CD8-positive, alpha-beta T cell (primary cell): ENCODE measurements at regions of chr7 and their contacts with region 1.

Region 1: DNA sequence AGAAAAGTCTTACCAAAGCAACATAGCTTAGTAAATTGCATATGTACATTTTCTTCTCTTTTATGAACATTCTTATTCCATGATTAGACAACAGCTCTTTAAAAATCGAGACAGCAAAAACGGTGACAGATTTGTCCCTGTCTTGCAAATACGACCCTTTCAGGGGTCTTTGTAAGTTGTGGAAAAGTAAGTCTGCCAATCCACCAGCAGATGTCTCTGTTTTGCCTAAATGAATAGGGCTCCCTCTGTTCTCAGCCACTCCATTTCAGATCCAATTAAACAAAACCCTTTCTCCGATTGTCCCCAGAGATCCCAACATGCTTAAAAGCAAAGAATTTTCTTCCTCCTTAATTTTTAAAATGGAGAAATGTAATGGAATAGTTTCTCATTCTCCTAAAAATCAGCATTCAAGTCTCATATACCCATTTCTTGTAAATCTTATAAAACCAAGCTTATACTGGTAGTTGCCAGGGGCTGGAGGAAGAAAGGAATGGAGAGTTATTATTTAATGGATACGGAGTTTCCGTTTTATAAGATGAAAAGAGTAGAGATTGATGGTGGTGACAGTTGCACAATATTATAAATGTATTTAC is 61.0 kb upstream of the NFE2L3 start:
- DNase-seq: peak in 2 of 9 experiments; percentile 59 to 73
- ATAC-seq: peak; percentile 61
- H3K4me3 ChIP-seq: no peak overlapping the region
- H3K4me3 Mint-ChIP-seq: no peak overlapping the region
- H3K27ac ChIP-seq: no peak overlapping the region
- H3K27ac Mint-ChIP-seq: no peak overlapping the region
- H3K4me1 ChIP-seq: peaks cover 6% of the 10 kb centered on the region
- H3K4me1 Mint-ChIP-seq: peaks cover 16% of the 10 kb centered on the region
- H3K27me3 ChIP-seq: no peaks in the 10 kb centered on the region
- H3K27me3 Mint-ChIP-seq: no peaks in the 10 kb centered on the region
- CTCF ChIP-seq: peak; percentile 70

Region 2: GRCh38 chr7:26078437-26079336 is 12.3 kb before region 1 on chr7:
- CTCF ChIA-PET with region 1: interaction called, 57 read pairs
- POLR2A ChIA-PET with region 1: no interaction called
- intact Hi-C with region 1: loop called in 1 of 2 experiments (anchors 2 kb)
- DNase-seq: peak; percentile 65 to 88 (median 81)
- ATAC-seq: peak; percentile 100
- H3K4me3 ChIP-seq: peak overlapping the region in 1 of 2 experiments; percentile 18
- H3K4me3 Mint-ChIP-seq: no peak overlapping the region
- H3K27ac ChIP-seq: no peak overlapping the region
- H3K27ac Mint-ChIP-seq: no peak overlapping the region
- H3K4me1 ChIP-seq: peaks cover 4% of the 10 kb centered on the region
- H3K4me1 Mint-ChIP-seq: peaks cover 6% of the 10 kb centered on the region
- H3K27me3 ChIP-seq: peaks cover 0 to 8% of the 10 kb centered on the region in 2 experiments
- H3K27me3 Mint-ChIP-seq: peaks cover 19% of the 10 kb centered on the region
- CTCF ChIP-seq: peak; percentile 80

Region 3: GRCh38 chr7:26117142-26117807 is 26.3 kb after region 1 on chr7:
- CTCF ChIA-PET with region 1: interaction called, 48 read pairs
- POLR2A ChIA-PET with region 1: interaction called, 3 read pairs
- intact Hi-C with region 1: loop called in 1 of 2 experiments (anchors 1 kb)
- DNase-seq: peak in 2 of 9 experiments; percentile 8 to 20
- ATAC-seq: no peak
- H3K4me3 ChIP-seq: no peak overlapping the region
- H3K4me3 Mint-ChIP-seq: no peak overlapping the region
- H3K27ac ChIP-seq: no peak overlapping the region
- H3K27ac Mint-ChIP-seq: no peak overlapping the region
- H3K4me1 ChIP-seq: no peaks in the 10 kb centered on the region
- H3K4me1 Mint-ChIP-seq: peaks cover under 1% of the 10 kb centered on the region
- H3K27me3 ChIP-seq: no peaks in the 10 kb centered on the region
- H3K27me3 Mint-ChIP-seq: no peaks in the 10 kb centered on the region
- CTCF ChIP-seq: no peak

Region 4: GRCh38 chr7:26159243-26159642 is 68.2 kb after region 1 on chr7:
- CTCF ChIA-PET with region 1: interaction called, 14 read pairs
- POLR2A ChIA-PET with region 1: interaction called, 3 read pairs
- intact Hi-C with region 1: no loop called
- DNase-seq: no peak
- ATAC-seq: no peak
- H3K4me3 ChIP-seq: no peak overlapping the region
- H3K4me3 Mint-ChIP-seq: no peak overlapping the region
- H3K27ac ChIP-seq: no peak overlapping the region
- H3K27ac Mint-ChIP-seq: no peak overlapping the region
- H3K4me1 ChIP-seq: peaks cover 23% of the 10 kb centered on the region
- H3K4me1 Mint-ChIP-seq: peaks cover 36% of the 10 kb centered on the region
- H3K27me3 ChIP-seq: no peaks in the 10 kb centered on the region
- H3K27me3 Mint-ChIP-seq: no peaks in the 10 kb centered on the region
- CTCF ChIP-seq: no peak

Region 5: GRCh38 chr7:26200444-26201246 is 109.6 kb after region 1 on chr7 and contains the start of gene HNRNPA2B1:
- CTCF ChIA-PET with region 1: interaction called, 239 read pairs
- POLR2A ChIA-PET with region 1: interaction called, 77 read pairs
- intact Hi-C with region 1: loop called (anchors 1 kb)
- DNase-seq: peak; percentile 96 to 100 (median 98)
- ATAC-seq: peak; percentile 75
- H3K4me3 ChIP-seq: peak within 1 kb of the TSS; percentile 75 to 95
- H3K4me3 Mint-ChIP-seq: peak within 1 kb of the TSS; percentile 100
- H3K27ac ChIP-seq: peak within 1 kb of the TSS; percentile 92 to 95
- H3K27ac Mint-ChIP-seq: peak within 1 kb of the TSS; percentile 99
- H3K4me1 ChIP-seq: peaks cover 49% of the 10 kb centered on the region
- H3K4me1 Mint-ChIP-seq: peaks cover 51% of the 10 kb centered on the region
- H3K27me3 ChIP-seq: no peaks in the 10 kb centered on the region
- H3K27me3 Mint-ChIP-seq: no peaks in the 10 kb centered on the region
- CTCF ChIP-seq: no peak
- total RNA-seq, gene HNRNPA2B1: 241 to 247 TPM

Region 6: DNA sequence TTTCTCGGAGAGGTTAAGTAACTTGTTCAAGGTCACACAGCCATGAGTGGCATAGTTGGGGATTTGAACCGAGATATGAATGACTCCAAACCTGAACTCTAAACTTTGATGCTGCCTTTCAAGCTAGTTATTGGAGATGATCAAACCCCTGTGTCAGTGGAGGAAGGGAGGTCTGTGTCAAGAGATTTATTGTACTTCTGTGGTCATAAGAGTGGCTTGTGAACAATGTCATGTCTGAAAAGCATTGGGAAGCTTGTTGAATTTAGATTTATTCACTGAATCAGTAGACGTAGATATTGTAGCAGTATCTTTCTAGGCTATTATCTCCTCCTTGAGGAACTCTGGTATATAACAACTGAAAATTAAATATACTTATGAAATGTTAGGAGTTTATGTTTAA is 227.9 kb after region 1 on chr7:
- CTCF ChIA-PET with region 1: interaction called, 10 read pairs
- POLR2A ChIA-PET with region 1: no interaction called
- intact Hi-C with region 1: no loop called
- DNase-seq: no peak
- ATAC-seq: no peak
- H3K4me3 ChIP-seq: no peak overlapping the region
- H3K4me3 Mint-ChIP-seq: no peak overlapping the region
- H3K27ac ChIP-seq: no peak overlapping the region
- H3K27ac Mint-ChIP-seq: no peak overlapping the region
- H3K4me1 ChIP-seq: no peaks in the 10 kb centered on the region
- H3K4me1 Mint-ChIP-seq: peaks cover 5% of the 10 kb centered on the region
- H3K27me3 ChIP-seq: no peaks in the 10 kb centered on the region
- H3K27me3 Mint-ChIP-seq: no peaks in the 10 kb centered on the region
- CTCF ChIP-seq: no peak